Activated CD8-positive, alpha-beta T cell treated with anti-CD3 and anti-CD28 coated beads, Interleukin-2, amount 10 ng/mL, durations not matched to agents 7 days and 5 days (primary cell): ENCODE measurements at regions of chr7 and their contacts with region 1.

Region 1: GRCh38 chr7:142323706-142324105 is 65.8 kb upstream of the PRSS58 start:
- DNase-seq: peak; percentile 53
- ATAC-seq: peak; percentile 72
- H3K4me3 Mint-ChIP-seq: no peak overlapping the region
- H3K27ac Mint-ChIP-seq: peak overlapping the region; percentile 31
- H3K4me1 Mint-ChIP-seq: peaks cover 20% of the 10 kb centered on the region
- H3K27me3 Mint-ChIP-seq: peaks cover 22% of the 10 kb centered on the region

Region 2: GRCh38 chr7:142313528-142313927 is 10.2 kb before region 1 on chr7:
- CTCF ChIA-PET with region 1: interaction called, 18 read pairs
- POLR2A ChIA-PET with region 1: no interaction called
- DNase-seq: peak; percentile 45
- ATAC-seq: peak; percentile 77
- H3K4me3 Mint-ChIP-seq: peak overlapping the region; percentile 10
- H3K27ac Mint-ChIP-seq: no peak overlapping the region
- H3K4me1 Mint-ChIP-seq: peaks cover 11% of the 10 kb centered on the region
- H3K27me3 Mint-ChIP-seq: peaks cover 32% of the 10 kb centered on the region

Region 3: DNA sequence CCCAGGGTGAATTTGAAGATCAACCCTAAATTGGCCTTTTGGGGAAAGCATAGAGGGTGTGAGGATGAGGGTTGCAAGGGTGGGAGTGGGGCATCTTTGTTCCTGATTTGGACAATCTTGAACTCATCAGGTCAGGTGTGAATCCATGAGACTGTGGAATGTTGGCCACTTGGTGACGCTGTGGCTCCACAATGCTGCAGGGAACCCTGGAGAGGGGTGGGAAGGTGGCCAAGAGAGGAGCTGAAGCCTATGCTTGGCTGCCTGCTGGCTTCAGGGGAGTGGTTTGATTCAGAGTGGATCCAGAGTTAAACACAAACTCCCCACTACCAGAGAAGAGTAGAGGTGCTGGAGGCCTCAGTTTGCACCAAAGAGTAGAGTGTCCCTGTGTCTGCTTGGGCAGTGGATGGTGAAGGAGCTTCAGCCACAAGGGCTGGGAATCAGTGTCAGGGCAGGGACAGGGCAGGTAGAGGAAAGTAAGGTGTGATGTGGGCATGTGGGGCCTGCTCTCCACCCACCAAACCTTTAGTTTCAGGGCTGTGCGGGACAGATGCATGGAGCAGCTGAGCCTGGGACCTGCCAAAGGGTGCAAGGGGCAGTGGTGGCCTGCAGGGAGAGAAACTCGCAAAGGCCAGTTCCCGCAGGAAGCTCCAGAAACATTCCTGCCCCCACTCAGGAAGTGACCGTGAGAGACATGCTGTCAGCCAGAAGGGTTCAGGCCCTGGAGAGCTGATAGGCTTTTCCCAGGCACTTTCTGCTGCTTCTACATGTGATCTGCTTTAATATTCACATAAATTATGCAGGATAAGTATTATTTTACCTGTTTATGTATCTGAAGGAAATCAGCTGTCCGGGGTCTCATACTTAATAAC is 15.2 kb after region 1 on chr7:
- CTCF ChIA-PET with region 1: interaction called, 39 read pairs
- POLR2A ChIA-PET with region 1: no interaction called
- DNase-seq: no peak
- ATAC-seq: peak; percentile 57
- H3K4me3 Mint-ChIP-seq: no peak overlapping the region
- H3K27ac Mint-ChIP-seq: no peak overlapping the region
- H3K4me1 Mint-ChIP-seq: peaks cover 2% of the 10 kb centered on the region
- H3K27me3 Mint-ChIP-seq: peaks cover 18% of the 10 kb centered on the region

Region 4: GRCh38 chr7:142345811-142346210 is 22.1 kb after region 1 on chr7:
- CTCF ChIA-PET with region 1: interaction called, 39 read pairs
- POLR2A ChIA-PET with region 1: no interaction called
- DNase-seq: peak; percentile 73
- ATAC-seq: peak; percentile 93
- H3K4me3 Mint-ChIP-seq: peak overlapping the region; percentile 47
- H3K27ac Mint-ChIP-seq: peak overlapping the region; percentile 79
- H3K4me1 Mint-ChIP-seq: peaks cover 27% of the 10 kb centered on the region
- H3K27me3 Mint-ChIP-seq: peaks cover 5% of the 10 kb centered on the region

Region 5: DNA sequence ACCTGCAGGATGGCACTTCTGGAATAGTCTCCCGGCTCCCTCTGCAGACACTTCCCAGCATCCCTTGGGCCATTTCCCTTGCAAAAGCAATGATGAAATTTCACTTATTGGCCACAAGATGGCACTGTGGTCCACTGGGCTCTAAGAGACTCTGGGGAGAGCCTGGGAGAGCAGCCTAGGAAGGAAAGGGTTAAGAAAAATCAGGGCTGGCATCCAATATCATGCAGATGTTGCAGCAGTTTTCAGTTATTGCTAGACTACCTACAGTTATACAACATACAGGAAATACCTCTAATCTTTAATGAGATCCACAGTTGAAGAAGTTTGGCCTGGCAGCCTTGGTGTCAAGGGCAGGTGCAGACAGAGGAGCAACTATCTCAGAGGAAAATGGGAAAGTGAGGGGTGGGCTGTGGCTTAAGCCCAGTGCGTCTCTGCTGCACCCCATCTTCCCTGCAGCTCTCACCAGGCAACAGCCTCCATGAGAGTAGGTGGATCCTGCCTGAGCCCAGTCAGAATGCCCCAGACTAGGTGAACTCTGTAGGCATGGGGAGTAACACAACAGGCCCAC is 34.3 kb after region 1 on chr7:
- CTCF ChIA-PET with region 1: interaction called, 21 read pairs
- POLR2A ChIA-PET with region 1: no interaction called
- DNase-seq: peak; percentile 51
- ATAC-seq: peak; percentile 43
- H3K4me3 Mint-ChIP-seq: no peak overlapping the region
- H3K27ac Mint-ChIP-seq: no peak overlapping the region
- H3K4me1 Mint-ChIP-seq: peaks cover 35% of the 10 kb centered on the region
- H3K27me3 Mint-ChIP-seq: peaks cover 25% of the 10 kb centered on the region

Region 6: GRCh38 chr7:142425281-142425680 is 101.6 kb after region 1 on chr7:
- CTCF ChIA-PET with region 1: no interaction called
- POLR2A ChIA-PET with region 1: no interaction called
- DNase-seq: no peak
- ATAC-seq: peak; percentile 61
- H3K4me3 Mint-ChIP-seq: no peak overlapping the region
- H3K27ac Mint-ChIP-seq: no peak overlapping the region
- H3K4me1 Mint-ChIP-seq: peaks cover 19% of the 10 kb centered on the region
- H3K27me3 Mint-ChIP-seq: peaks cover 3% of the 10 kb centered on the region